Psoas muscle (tissue), 8 donors: ENCODE measurements at regions of chr1 and their contacts with region 1.

Region 1: DNA sequence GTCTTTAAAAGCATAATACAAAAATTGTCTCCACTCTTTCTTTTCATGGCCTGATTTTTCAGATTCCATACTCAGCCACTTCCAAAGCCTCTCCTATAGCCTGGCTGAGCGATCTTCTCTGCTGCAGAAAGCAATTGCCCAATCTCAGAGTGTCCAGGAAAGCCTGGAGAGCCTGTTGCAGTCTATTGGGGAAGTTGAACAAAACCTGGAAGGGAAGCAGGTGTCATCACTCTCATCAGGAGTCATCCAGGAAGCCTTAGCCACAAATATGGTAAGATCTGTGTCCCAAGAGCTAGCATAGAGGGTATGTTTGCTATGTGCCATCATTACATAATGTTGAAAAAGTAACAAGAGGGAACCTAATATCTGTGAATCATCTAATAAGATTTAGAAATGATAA is 130.7 kb upstream of the BMP8A start:
- DNase-seq: no peak
- ATAC-seq: peak in 3 of 4 donors; percentile 27 to 67 (median 48)
- H3K4me3 ChIP-seq: no peak overlapping the region
- H3K27ac ChIP-seq: no peak overlapping the region
- H3K4me1 ChIP-seq: peaks cover 5% of the 10 kb centered on the region
- H3K27me3 ChIP-seq: no peaks in the 10 kb centered on the region
- CTCF ChIP-seq: no peak

Region 2: DNA sequence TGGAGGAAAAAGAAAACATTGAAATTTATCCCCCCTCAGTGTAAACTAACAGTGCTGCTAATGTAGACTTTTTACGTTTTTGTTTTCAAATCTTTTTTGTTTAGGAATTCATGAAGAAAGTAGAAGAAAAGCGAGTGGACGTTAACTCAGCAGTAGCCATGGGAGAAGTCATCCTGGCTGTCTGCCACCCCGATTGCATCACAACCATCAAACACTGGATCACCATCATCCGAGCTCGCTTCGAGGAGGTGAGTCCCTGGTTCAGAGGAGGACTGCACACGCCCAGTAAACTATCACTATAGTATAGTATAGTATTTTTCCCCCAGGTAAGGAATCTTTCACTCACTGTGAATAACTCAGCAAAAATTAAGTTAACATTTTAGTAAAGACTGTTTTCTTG is 92.9 kb after region 1 on chr1:
- intact Hi-C with region 1: loop called in 1 of 2 experiments (anchors 10 kb)
- DNase-seq: peak; percentile 81 to 82
- ATAC-seq: peak; percentile 46 to 87 (median 64)
- H3K4me3 ChIP-seq: no peak overlapping the region
- H3K27ac ChIP-seq: no peak overlapping the region
- H3K4me1 ChIP-seq: no peaks in the 10 kb centered on the region
- H3K27me3 ChIP-seq: no peaks in the 10 kb centered on the region
- CTCF ChIP-seq: no peak

Region 3: DNA sequence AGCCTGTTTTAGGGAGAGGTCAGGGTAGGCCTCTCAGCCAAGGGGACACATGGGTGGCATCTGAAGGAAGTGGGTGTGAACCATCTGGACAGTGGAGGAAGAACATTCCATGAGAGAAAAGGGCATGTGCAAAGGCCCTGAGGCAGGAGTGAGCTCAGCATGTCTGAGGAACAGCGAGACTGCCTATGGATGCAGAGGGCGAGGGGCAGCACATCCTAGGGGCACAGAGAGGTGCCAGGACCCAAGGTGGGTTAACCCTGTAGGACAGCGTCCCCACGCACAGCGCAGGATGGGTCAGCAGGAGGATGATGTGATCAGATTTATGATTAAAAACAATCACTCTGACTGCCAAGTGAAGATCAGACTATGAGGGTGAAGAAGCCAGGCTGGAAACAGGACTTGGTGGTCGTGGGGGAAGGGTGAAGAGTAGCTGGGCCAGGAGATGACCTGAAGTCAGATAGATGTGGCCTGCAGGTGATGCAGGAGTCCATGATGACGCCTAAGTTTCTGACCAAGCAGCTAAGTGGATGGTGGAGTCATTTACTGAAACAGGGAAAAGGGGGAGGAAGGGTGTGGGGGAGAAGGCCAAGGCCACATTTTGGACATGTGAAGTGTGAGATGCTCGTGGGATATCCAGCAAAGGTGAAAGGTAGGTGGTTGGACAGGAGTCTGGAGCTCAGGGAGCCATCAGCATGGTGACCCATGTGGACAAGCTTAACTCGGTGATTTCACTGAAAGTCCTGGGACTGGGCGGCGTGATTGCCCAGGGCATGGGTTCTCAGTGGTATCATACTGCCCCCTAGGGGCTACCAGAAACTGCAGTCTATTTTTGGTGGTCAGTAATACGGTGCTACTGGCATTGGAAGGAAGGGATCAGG is 178.1 kb after region 1 on chr1:
- intact Hi-C with region 1: no loop called
- DNase-seq: peak; percentile 59 to 74
- ATAC-seq: peak; percentile 79 to 86 (median 85)
- H3K4me3 ChIP-seq: no peak overlapping the region
- H3K27ac ChIP-seq: no peak overlapping the region
- H3K4me1 ChIP-seq: peaks cover 10% of the 10 kb centered on the region
- H3K27me3 ChIP-seq: no peaks in the 10 kb centered on the region
- CTCF ChIP-seq: peak; percentile 88